ENCODE measurements at regions of chr12 and their contacts with region 1.

Region 1: GRCh38 chr12:108562348-108563135 is at the start of gene ISCU:
- DNase-seq: peak; percentile 96 to 98 (median 98)
- H3K4me3 ChIP-seq: peak within 1 kb of the TSS; percentile 84 to 97 (median 92)
- H3K4me3 Mint-ChIP-seq: peak within 1 kb of the TSS; percentile 100
- H3K27ac ChIP-seq: peak within 1 kb of the TSS; percentile 72 to 95
- H3K27ac Mint-ChIP-seq: peak within 1 kb of the TSS; percentile 98 to 100 (median 100)
- H3K4me1 ChIP-seq: peaks cover 50 to 65% of the 10 kb centered on the region in 2 donors
- H3K4me1 Mint-ChIP-seq: peaks cover 53% of the 10 kb centered on the region
- H3K27me3 ChIP-seq: no peaks in the 10 kb centered on the region
- H3K27me3 Mint-ChIP-seq: peaks cover 0 to 2% (median 0%) of the 10 kb centered on the region in 3 donors
- CTCF ChIP-seq: no peak
- polyA plus RNA-seq, gene ISCU: 90.9 to 114 (median 111) TPM

Region 2: GRCh38 chr12:108514973-108515814 is 47.3 kb before region 1 on chr12 and contains the start of gene FICD:
- intact Hi-C with region 1: loop called in 1 of 2 experiments (anchors 5 kb)
- DNase-seq: peak; percentile 98
- H3K4me3 ChIP-seq: peak within 1 kb of the TSS; percentile 66 to 93 (median 85)
- H3K4me3 Mint-ChIP-seq: peak within 1 kb of the TSS; percentile 89 to 93
- H3K27ac ChIP-seq: peak within 1 kb of the TSS; percentile 49 to 87
- H3K27ac Mint-ChIP-seq: peak within 1 kb of the TSS; percentile 84 to 96 (median 93)
- H3K4me1 ChIP-seq: peaks cover 13 to 24% of the 10 kb centered on the region in 2 donors
- H3K4me1 Mint-ChIP-seq: peaks cover 24% of the 10 kb centered on the region
- H3K27me3 ChIP-seq: no peaks in the 10 kb centered on the region
- H3K27me3 Mint-ChIP-seq: peaks cover 9 to 14% (median 11%) of the 10 kb centered on the region in 3 donors
- CTCF ChIP-seq: no peak
- polyA plus RNA-seq, gene FICD: 1.00 to 1.9 (median 1.6) TPM

Region 3: GRCh38 chr12:108633534-108634248 is 71.1 kb after region 1 on chr12 and contains the start of gene SELPLG:
- intact Hi-C with region 1: loop called in 1 of 2 experiments (anchors 5 kb)
- DNase-seq: peak; percentile 90 to 94 (median 92)
- H3K4me3 ChIP-seq: peak within 1 kb of the TSS; percentile 55 to 88 (median 83)
- H3K4me3 Mint-ChIP-seq: peak within 1 kb of the TSS; percentile 96 to 98
- H3K27ac ChIP-seq: peak within 1 kb of the TSS; percentile 98 to 99
- H3K27ac Mint-ChIP-seq: peak within 1 kb of the TSS; percentile 98 to 100 (median 100)
- H3K4me1 ChIP-seq: peaks cover 96% of the 10 kb centered on the region in 2 donors
- H3K4me1 Mint-ChIP-seq: peaks cover 90% of the 10 kb centered on the region
- H3K27me3 ChIP-seq: no peaks in the 10 kb centered on the region
- H3K27me3 Mint-ChIP-seq: no peaks in the 10 kb centered on the region
- CTCF ChIP-seq: peak; percentile 30
- polyA plus RNA-seq, gene SELPLG: 193 to 349 (median 247) TPM

Region 4: GRCh38 chr12:108653082-108653516 is 90.6 kb after region 1 on chr12:
- intact Hi-C with region 1: no loop called
- DNase-seq: no peak
- H3K4me3 ChIP-seq: no peak overlapping the region
- H3K4me3 Mint-ChIP-seq: no peak overlapping the region
- H3K27ac ChIP-seq: peak overlapping the region in 1 of 2 donors; percentile 64
- H3K27ac Mint-ChIP-seq: peak overlapping the region in 3 of 7 donors; percentile 52 to 60 (median 55)
- H3K4me1 ChIP-seq: no peaks in the 10 kb centered on the region
- H3K4me1 Mint-ChIP-seq: no peaks in the 10 kb centered on the region
- H3K27me3 ChIP-seq: no peaks in the 10 kb centered on the region
- H3K27me3 Mint-ChIP-seq: no peaks in the 10 kb centered on the region
- CTCF ChIP-seq: no peak

Region 5: GRCh38 chr12:108731105-108731865 is 168.7 kb after region 1 on chr12 and contains the start of gene CORO1C:
- intact Hi-C with region 1: loop called in 1 of 2 experiments (anchors 5 kb)
- DNase-seq: peak; percentile 97 to 99 (median 98)
- H3K4me3 ChIP-seq: peak within 1 kb of the TSS; percentile 79 to 92 (median 88)
- H3K4me3 Mint-ChIP-seq: peak within 1 kb of the TSS; percentile 97
- H3K27ac ChIP-seq: peak within 1 kb of the TSS; percentile 92 to 99
- H3K27ac Mint-ChIP-seq: peak within 1 kb of the TSS; percentile 98 to 100 (median 99)
- H3K4me1 ChIP-seq: peaks cover 67 to 83% of the 10 kb centered on the region in 2 donors
- H3K4me1 Mint-ChIP-seq: peaks cover 73% of the 10 kb centered on the region
- H3K27me3 ChIP-seq: no peaks in the 10 kb centered on the region
- H3K27me3 Mint-ChIP-seq: peaks cover 0 to 3% (median 2%) of the 10 kb centered on the region in 3 donors
- CTCF ChIP-seq: peak; percentile 97
- polyA plus RNA-seq, gene CORO1C: 77.5 to 285 (median 229) TPM

Region 6: DNA sequence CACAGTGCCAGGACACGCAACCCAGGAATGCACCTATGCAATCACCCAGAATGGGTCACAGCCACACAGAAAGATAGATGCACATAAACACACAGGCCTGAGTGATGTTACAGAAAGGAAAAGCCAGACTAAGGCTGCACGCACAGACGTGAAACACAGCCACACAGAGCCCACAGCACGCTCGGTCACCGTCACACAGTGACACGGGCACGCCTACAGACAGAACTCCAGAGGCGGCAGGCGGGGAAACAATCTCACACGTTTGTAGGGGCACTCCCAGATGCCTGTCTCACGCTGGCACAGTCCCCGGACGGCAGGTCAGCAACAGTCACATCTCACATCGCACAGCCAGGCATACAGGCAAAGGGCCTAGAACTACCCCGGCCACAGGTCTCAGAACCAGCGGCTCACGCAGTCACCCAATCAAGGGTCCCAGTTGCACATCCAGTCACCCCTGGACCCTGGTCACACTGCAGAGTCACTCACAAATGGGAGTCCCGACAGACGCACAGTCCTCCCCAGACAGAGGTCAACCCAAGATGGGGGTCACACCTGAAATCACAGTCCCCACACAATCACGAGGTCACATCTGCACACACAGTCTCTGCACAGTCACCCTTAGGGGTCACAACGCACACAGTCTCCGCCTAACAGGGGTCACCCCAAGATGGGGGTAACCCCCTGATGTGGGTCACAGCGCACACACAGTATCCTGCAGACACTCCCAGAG is 294.1 kb after region 1 on chr12:
- intact Hi-C with region 1: loop called in 1 of 2 experiments (anchors 5 kb)
- DNase-seq: peak; percentile 84 to 93 (median 90)
- H3K4me3 ChIP-seq: peak overlapping the region; percentile 79 to 89 (median 82)
- H3K4me3 Mint-ChIP-seq: peak overlapping the region; percentile 97 to 100
- H3K27ac ChIP-seq: peak overlapping the region; percentile 70 to 98
- H3K27ac Mint-ChIP-seq: peak overlapping the region; percentile 94 to 99 (median 98)
- H3K4me1 ChIP-seq: peaks cover 71 to 77% of the 10 kb centered on the region in 2 donors
- H3K4me1 Mint-ChIP-seq: peaks cover 74% of the 10 kb centered on the region
- H3K27me3 ChIP-seq: no peaks in the 10 kb centered on the region
- H3K27me3 Mint-ChIP-seq: peaks cover 0 to 2% (median 0%) of the 10 kb centered on the region in 3 donors
- CTCF ChIP-seq: no peak

Region 7: GRCh38 chr12:109052414-109053323 is 490.1 kb after region 1 on chr12 and contains the start of gene USP30:
- intact Hi-C with region 1: loop called in 1 of 2 experiments (anchors 5 kb)
- DNase-seq: peak; percentile 81 to 88 (median 86)
- H3K4me3 ChIP-seq: peak within 1 kb of the TSS; percentile 70 to 94 (median 94)
- H3K4me3 Mint-ChIP-seq: peak within 1 kb of the TSS; percentile 89 to 92
- H3K27ac ChIP-seq: peak within 1 kb of the TSS; percentile 74 to 85
- H3K27ac Mint-ChIP-seq: peak within 1 kb of the TSS; percentile 69 to 97 (median 92)
- H3K4me1 ChIP-seq: peaks cover 18 to 21% of the 10 kb centered on the region in 2 donors
- H3K4me1 Mint-ChIP-seq: peaks cover 21% of the 10 kb centered on the region
- H3K27me3 ChIP-seq: no peaks in the 10 kb centered on the region
- H3K27me3 Mint-ChIP-seq: peaks cover 2 to 9% (median 6%) of the 10 kb centered on the region in 3 donors
- CTCF ChIP-seq: no peak
- polyA plus RNA-seq, gene USP30: 4.5 to 8.2 (median 6.8) TPM